Left cardiac atrium (tissue), 4 donors: ENCODE measurements at regions of chr10 and their contacts with region 1.

Region 1: DNA sequence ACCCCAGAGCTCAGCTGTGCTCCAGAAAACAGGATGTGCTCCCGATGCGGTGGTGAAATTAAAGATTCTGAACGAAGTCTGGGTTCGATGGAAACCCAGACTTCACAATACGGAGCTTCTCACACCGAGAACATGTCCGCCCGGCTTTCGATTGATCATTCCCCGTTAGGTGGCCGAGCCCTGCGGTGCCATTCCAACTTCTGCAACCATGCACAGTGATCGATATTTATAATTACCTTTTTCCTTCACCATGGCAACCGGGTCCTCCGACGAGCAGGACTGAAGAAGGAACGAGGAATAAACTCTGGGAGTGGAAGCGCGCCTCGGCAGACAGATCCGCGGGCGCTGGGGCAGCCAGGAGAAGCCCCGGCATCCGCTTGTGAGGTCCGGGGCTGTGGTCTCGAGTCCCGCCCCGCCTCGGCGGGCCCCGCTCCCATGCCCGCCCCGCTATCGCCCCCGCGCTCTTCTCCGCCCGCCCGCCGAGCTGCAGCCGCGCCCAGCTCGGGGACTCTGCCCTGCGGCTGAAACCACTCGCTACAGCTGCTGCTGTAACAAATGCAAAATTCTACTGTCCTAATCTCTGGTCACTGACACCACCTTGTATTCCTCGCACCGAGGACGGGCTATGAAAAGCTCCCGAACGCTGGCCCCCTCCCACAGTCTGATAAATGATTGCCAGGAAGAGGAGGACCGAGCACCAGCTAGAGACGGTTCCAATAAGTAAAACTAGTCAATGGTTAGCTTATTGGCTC is 26.2 kb downstream of the ABLIM1 start:
- DNase-seq: peak; percentile 53
- ATAC-seq: peak; percentile 53 to 61

Region 2: DNA sequence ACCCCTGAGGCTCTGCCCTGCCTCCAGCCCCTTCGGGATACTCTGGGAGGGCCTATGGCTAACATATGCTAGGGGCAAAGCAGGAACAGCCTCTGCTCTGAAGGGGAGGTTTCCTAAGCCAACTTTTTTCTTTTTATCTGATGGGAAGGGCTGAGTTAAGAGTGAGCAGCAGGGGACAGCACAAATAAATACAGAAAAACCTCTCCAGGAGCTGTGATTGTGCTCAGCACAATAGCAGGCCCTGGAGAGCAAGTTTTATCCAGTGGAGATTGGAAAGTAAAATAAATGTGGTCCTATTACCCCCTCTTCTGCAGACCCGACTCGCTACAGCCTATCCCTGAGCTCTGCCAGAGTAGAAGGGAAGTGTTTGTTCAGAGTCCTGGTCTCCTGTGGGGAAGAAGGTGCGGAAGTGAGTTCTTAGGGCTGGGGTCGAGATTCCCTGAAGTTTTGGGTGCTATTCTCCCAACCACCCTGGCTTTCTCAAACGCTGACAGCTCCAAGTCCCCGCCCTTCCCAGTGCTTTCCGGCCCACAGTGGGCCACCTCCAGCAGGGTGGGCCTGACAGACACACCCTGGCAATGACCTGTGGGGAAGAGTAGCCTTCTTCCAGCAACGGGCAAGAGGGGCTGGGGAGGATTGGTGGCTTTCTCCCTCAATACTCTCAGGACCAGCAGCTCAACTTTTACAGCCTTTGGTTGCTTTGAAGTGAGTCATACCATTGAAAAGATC is 204.6 kb before region 1 on chr10:
- intact Hi-C with region 1: no loop called
- DNase-seq: no peak
- ATAC-seq: peak; percentile 45 to 66

Region 3: DNA sequence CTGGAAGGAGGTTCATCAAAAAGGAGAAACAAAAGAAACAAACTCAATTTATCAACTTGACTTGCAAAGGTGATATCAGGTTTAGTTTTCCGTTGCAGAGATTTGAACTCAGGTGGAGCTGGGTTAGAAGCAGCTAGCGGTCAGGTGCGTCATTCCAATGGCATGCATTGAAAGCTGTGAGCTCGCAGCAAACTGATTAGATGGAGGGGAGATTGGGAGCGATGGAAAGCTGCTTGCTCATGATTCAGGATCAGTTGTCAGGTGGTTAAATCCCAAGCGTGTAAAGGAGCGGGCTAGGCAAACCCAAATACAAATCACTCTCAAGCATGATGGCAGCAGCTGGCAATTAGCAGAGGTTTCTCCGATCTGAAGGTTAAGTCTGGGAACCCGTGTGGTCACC is 178.3 kb before region 1 on chr10:
- intact Hi-C with region 1: no loop called
- DNase-seq: no peak
- ATAC-seq: no peak

Region 4: DNA sequence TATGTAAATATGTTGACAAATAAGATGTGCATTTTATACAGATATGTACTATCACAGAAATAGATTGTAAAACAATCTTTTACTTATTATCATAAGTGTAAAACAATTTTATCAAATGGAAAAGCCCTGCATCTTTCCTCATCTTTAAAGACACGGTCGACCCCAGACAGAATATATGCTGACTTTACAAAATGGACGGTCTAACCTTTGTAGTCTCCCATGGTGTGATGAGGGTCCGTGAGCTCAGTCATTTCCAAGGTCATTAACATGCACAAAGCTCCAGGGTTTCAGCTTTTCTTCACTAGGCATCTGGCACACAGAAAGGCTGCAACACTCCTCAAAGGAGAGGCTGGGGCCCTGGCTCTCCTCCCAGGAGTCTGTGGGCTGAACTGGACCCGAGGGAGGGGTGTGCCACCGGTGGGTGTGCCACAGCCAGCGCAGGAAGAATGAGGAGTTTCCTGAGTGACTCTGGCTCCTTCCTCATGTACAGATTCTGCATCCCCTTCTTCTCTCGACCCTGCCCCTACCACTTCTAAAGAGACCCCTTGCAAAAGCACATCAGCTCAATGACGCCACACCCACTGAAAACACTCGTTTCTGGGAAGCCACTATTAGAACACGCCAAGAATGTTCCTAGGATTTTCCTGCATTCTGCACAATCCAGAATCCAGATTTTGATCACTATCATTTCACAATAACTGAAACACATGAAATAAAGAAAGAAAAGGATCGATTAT is 52.4 kb after region 1 on chr10:
- intact Hi-C with region 1: loop called in 1 of 2 experiments (anchors 5 kb)
- DNase-seq: peak; percentile 79
- ATAC-seq: peak; percentile 58 to 75

Region 5: DNA sequence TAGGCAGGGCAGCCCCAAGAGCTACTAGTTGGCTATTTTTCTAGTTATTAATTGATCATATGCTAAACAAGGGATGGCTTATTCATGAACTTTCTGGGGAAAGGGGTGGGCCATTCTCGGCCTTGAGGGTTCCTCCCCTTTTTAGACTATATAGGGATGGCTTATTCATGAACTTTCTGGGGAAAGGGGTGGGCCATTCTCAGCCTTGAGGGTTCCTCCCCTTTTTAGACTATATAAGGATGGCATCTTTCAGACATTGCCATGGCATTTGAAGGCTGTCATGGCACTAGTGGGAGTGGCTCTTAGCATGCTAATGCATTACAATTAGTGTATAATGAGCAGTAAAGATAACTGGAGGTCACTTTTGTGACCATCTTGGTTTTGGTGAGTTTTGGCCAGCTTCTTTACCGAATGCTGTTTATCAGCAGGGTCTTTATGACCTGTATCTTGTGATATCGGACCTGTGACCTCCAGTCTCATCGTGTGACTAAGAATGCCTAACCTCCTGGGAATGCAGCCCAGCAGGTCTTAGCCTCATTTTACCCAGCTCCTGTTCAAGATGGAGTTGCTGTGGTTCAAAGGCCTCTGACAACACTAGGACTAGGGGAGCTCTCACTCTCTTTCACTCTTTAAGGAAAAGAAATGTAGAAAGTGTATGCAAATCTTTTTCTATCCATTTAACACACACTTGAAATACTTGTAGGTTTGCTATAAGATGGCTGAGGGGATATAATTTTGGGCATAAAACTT is 197.5 kb after region 1 on chr10:
- intact Hi-C with region 1: no loop called
- DNase-seq: no peak
- ATAC-seq: no peak